B cell (primary cell): ENCODE measurements at regions of chr3 and their contacts with region 1.

Region 1: DNA sequence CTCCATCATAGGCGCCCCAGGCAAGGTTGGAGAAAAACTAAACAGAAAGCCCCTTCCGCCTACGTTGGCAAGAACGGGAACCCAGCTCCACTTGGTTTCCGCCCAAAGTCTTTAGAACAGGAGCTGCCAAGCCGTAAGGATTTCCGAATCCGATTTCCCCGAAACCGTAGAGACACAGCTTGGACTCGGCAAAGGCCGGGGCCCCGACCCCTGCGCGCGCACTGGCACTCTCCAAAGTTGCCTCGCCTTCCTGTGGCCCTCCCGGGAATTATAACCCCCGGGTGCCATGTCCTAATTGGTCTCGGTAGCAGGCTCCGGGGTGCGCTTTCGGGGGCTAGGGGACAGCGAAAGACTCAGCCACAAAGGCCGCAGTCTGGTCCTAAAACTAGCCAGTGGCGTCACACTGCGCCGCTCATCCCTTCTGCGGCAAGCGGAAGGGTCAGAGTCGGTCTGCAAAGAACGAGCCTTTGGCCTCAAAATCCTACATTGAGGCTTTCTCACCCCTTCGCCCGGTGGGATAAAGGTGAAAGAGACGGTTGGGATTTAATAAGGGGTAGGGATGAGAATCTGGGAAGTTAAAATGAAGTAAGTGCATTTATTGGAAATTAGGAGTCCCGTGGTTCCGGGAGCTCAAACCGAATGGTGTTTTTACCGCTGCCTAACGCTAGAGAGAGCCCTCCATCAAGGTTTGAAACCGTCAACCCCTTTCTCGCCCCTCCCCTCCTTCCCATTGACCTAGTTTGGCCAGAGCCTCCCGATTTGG is 6.8 kb downstream of the BCL6 start:
- DNase-seq: peak; percentile 81
- ATAC-seq: peak; percentile 46
- H3K4me3 ChIP-seq: peak overlapping the region; percentile 66 to 93 (median 84)
- H3K4me3 Mint-ChIP-seq: peak overlapping the region; percentile 97
- H3K27ac ChIP-seq: peak overlapping the region in 1 of 2 donors; percentile 66
- H3K27ac Mint-ChIP-seq: peak overlapping the region; percentile 75
- H3K4me1 ChIP-seq: peaks cover 34 to 57% of the 10 kb centered on the region in 2 donors
- H3K4me1 Mint-ChIP-seq: peaks cover 62% of the 10 kb centered on the region
- H3K27me3 ChIP-seq: no peaks in the 10 kb centered on the region
- H3K27me3 Mint-ChIP-seq: no peaks in the 10 kb centered on the region
- CTCF ChIP-seq: peak; percentile 82

Region 2: GRCh38 chr3:186035277-186035676 is 1703.2 kb before region 1 on chr3:
- CTCF ChIA-PET with region 1: no interaction called
- POLR2A ChIA-PET with region 1: no interaction called
- intact Hi-C with region 1: no loop called
- DNase-seq: no peak
- ATAC-seq: no peak
- H3K4me3 ChIP-seq: no peak overlapping the region
- H3K4me3 Mint-ChIP-seq: no peak overlapping the region
- H3K27ac ChIP-seq: no peak overlapping the region
- H3K27ac Mint-ChIP-seq: no peak overlapping the region
- H3K4me1 ChIP-seq: no peaks in the 10 kb centered on the region
- H3K4me1 Mint-ChIP-seq: no peaks in the 10 kb centered on the region
- H3K27me3 ChIP-seq: peaks cover 0 to 5% (median 1%) of the 10 kb centered on the region in 4 experiments
- H3K27me3 Mint-ChIP-seq: peaks cover 28% of the 10 kb centered on the region
- CTCF ChIP-seq: no peak

Region 3: DNA sequence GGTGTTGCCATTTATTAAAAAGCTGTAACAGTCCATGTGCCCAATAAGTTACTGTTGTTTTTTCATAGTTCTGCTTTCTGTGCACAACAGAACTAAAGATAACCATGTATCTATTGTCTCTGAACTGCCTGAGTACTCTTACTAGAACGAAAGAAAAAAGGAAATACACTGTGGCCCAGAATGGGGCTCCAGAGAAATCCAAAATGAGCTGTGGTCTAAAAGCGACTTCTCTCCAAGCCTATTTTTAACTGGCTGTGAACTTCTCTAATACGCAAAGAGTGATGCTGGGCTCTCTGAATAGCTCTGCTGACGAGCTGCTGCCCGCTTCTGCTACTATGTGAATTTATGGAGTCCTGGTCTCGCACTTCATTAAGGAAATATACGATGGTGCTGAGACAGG is 359.3 kb after region 1 on chr3:
- CTCF ChIA-PET with region 1: interaction called, 11 read pairs
- POLR2A ChIA-PET with region 1: interaction called, 3 read pairs
- intact Hi-C with region 1: no loop called
- DNase-seq: peak; percentile 71
- ATAC-seq: peak; percentile 79
- H3K4me3 ChIP-seq: peak overlapping the region in 2 of 5 experiments; percentile 9 to 16
- H3K4me3 Mint-ChIP-seq: peak overlapping the region; percentile 59
- H3K27ac ChIP-seq: peak overlapping the region; percentile 1 to 27
- H3K27ac Mint-ChIP-seq: peak overlapping the region; percentile 65
- H3K4me1 ChIP-seq: peaks cover 15 to 17% of the 10 kb centered on the region in 2 donors
- H3K4me1 Mint-ChIP-seq: peaks cover 20% of the 10 kb centered on the region
- H3K27me3 ChIP-seq: no peaks in the 10 kb centered on the region
- H3K27me3 Mint-ChIP-seq: no peaks in the 10 kb centered on the region
- CTCF ChIP-seq: no peak

Region 4: GRCh38 chr3:188362405-188362831 is 623.9 kb after region 1 on chr3:
- CTCF ChIA-PET with region 1: interaction called, 15 read pairs
- POLR2A ChIA-PET with region 1: no interaction called
- intact Hi-C with region 1: loop called (anchors 5 kb)
- DNase-seq: no peak
- ATAC-seq: peak; percentile 44
- H3K4me3 ChIP-seq: no peak overlapping the region
- H3K4me3 Mint-ChIP-seq: peak overlapping the region; percentile 55
- H3K27ac ChIP-seq: no peak overlapping the region
- H3K27ac Mint-ChIP-seq: peak overlapping the region; percentile 77
- H3K4me1 ChIP-seq: peaks cover 43 to 63% of the 10 kb centered on the region in 2 donors
- H3K4me1 Mint-ChIP-seq: peaks cover 78% of the 10 kb centered on the region
- H3K27me3 ChIP-seq: no peaks in the 10 kb centered on the region
- H3K27me3 Mint-ChIP-seq: no peaks in the 10 kb centered on the region
- CTCF ChIP-seq: no peak

Region 5: GRCh38 chr3:188489639-188490405 is 751.3 kb after region 1 on chr3:
- CTCF ChIA-PET with region 1: no interaction called
- POLR2A ChIA-PET with region 1: no interaction called
- intact Hi-C with region 1: loop called (anchors 1 kb)
- DNase-seq: peak; percentile 80
- ATAC-seq: peak; percentile 90
- H3K4me3 ChIP-seq: peak overlapping the region in 1 of 5 experiments; percentile 13
- H3K4me3 Mint-ChIP-seq: peak overlapping the region; percentile 32
- H3K27ac ChIP-seq: peak overlapping the region; percentile 61 to 85
- H3K27ac Mint-ChIP-seq: peak overlapping the region; percentile 81
- H3K4me1 ChIP-seq: peaks cover 32 to 33% of the 10 kb centered on the region in 2 donors
- H3K4me1 Mint-ChIP-seq: peaks cover 43% of the 10 kb centered on the region
- H3K27me3 ChIP-seq: no peaks in the 10 kb centered on the region
- H3K27me3 Mint-ChIP-seq: no peaks in the 10 kb centered on the region
- CTCF ChIP-seq: no peak

Region 6: DNA sequence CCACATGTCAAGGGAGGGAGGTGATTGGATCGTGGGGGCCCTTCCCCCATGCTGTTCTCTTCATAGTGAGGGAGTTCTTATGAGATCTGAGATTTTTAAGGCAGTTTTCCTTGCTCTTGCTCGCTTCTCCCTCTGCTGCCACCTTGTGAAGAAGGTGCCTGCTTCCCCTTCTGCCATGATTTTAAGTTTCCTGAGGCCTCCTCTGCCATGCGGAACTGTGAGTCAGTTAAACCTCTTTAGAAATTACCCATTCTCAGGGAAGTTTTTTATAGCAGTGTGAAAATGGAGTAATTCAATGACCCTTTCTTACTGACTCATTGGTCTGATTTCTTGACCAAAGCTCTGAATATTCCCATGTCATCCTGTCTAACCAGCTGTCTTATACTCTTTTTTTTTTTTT is 948.9 kb after region 1 on chr3:
- CTCF ChIA-PET with region 1: interaction called, 16 read pairs
- POLR2A ChIA-PET with region 1: no interaction called
- intact Hi-C with region 1: loop called (anchors 5 kb)
- DNase-seq: no peak
- ATAC-seq: no peak
- H3K4me3 ChIP-seq: no peak overlapping the region
- H3K4me3 Mint-ChIP-seq: no peak overlapping the region
- H3K27ac ChIP-seq: peak overlapping the region in 1 of 2 donors; percentile 51
- H3K27ac Mint-ChIP-seq: peak overlapping the region; percentile 68
- H3K4me1 ChIP-seq: peaks cover 14 to 20% of the 10 kb centered on the region in 2 donors
- H3K4me1 Mint-ChIP-seq: peaks cover 45% of the 10 kb centered on the region
- H3K27me3 ChIP-seq: no peaks in the 10 kb centered on the region
- H3K27me3 Mint-ChIP-seq: no peaks in the 10 kb centered on the region
- CTCF ChIP-seq: no peak

Region 7: GRCh38 chr3:188954590-188955208 is 1216.2 kb after region 1 on chr3:
- CTCF ChIA-PET with region 1: interaction called, 1,008 read pairs
- POLR2A ChIA-PET with region 1: interaction called, 16 read pairs
- intact Hi-C with region 1: loop called (anchors 1 kb)
- DNase-seq: peak; percentile 82
- ATAC-seq: peak; percentile 83
- H3K4me3 ChIP-seq: no peak overlapping the region
- H3K4me3 Mint-ChIP-seq: no peak overlapping the region
- H3K27ac ChIP-seq: no peak overlapping the region
- H3K27ac Mint-ChIP-seq: no peak overlapping the region
- H3K4me1 ChIP-seq: no peaks in the 10 kb centered on the region
- H3K4me1 Mint-ChIP-seq: peaks cover 3% of the 10 kb centered on the region
- H3K27me3 ChIP-seq: no peaks in the 10 kb centered on the region
- H3K27me3 Mint-ChIP-seq: no peaks in the 10 kb centered on the region
- CTCF ChIP-seq: peak; percentile 88